ENCODE measurements at regions of chr7 and their contacts with region 1.

Region 1: GRCh38 chr7:35801392-35802101 is 690 bp downstream of the SEPTIN7 start:
- DNase-seq: peak; percentile 83
- ATAC-seq: peak; percentile 35
- H3K4me3 Mint-ChIP-seq: peak overlapping the region; percentile 97
- H3K27ac Mint-ChIP-seq: peak overlapping the region; percentile 99
- H3K4me1 Mint-ChIP-seq: peaks cover 43% of the 10 kb centered on the region
- H3K27me3 Mint-ChIP-seq: no peaks in the 10 kb centered on the region

Region 2: GRCh38 chr7:35037526-35038339 is 763.8 kb before region 1 on chr7:
- CTCF ChIA-PET with region 1: no interaction called
- POLR2A ChIA-PET with region 1: no interaction called
- intact Hi-C with region 1: loop called in 1 of 2 experiments (anchors 2 kb)
- DNase-seq: peak; percentile 93
- ATAC-seq: peak; percentile 82
- H3K4me3 Mint-ChIP-seq: peak overlapping the region; percentile 77
- H3K27ac Mint-ChIP-seq: peak overlapping the region; percentile 89
- H3K4me1 Mint-ChIP-seq: peaks cover 25% of the 10 kb centered on the region
- H3K27me3 Mint-ChIP-seq: no peaks in the 10 kb centered on the region

Region 3: DNA sequence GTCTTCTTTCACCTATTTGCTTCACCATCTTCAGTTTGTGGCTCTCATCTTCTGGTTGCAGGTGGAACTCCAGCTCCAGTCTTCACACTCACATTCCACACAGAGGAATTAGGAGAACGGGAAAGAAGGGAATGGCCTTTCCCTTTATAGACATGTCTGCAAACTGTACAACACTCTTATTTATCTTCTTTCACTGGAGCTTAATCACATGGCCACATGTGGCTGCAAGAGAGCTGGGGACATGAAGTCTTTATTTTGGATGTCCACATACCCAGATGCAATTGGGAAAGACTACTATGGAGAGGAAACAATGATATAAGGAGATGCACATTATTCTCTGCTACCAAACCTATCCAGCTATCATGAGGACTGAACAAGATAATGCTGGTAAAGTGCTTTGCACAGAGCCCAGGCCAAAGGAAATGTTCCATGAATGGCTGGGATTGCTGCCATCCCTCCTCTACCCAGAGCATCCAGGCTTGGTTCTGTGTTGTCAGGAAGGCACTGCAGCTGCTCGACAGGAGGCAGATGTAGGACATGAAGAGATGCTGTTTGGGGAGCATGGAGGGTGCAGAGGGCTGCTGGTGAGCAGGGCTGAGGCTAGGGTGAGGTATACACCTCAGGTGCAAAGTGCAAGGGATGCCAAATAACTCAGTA is 363.8 kb before region 1 on chr7:
- CTCF ChIA-PET with region 1: no interaction called
- POLR2A ChIA-PET with region 1: no interaction called
- intact Hi-C with region 1: no loop called
- DNase-seq: no peak
- ATAC-seq: no peak
- H3K4me3 Mint-ChIP-seq: no peak overlapping the region
- H3K27ac Mint-ChIP-seq: no peak overlapping the region
- H3K4me1 Mint-ChIP-seq: no peaks in the 10 kb centered on the region
- H3K27me3 Mint-ChIP-seq: peaks cover 10% of the 10 kb centered on the region

Region 4: GRCh38 chr7:35482241-35482640 is 319.3 kb before region 1 on chr7:
- CTCF ChIA-PET with region 1: no interaction called
- POLR2A ChIA-PET with region 1: no interaction called
- intact Hi-C with region 1: no loop called
- DNase-seq: no peak
- ATAC-seq: no peak
- H3K4me3 Mint-ChIP-seq: no peak overlapping the region
- H3K27ac Mint-ChIP-seq: no peak overlapping the region
- H3K4me1 Mint-ChIP-seq: no peaks in the 10 kb centered on the region
- H3K27me3 Mint-ChIP-seq: peaks cover 14% of the 10 kb centered on the region

Region 5: DNA sequence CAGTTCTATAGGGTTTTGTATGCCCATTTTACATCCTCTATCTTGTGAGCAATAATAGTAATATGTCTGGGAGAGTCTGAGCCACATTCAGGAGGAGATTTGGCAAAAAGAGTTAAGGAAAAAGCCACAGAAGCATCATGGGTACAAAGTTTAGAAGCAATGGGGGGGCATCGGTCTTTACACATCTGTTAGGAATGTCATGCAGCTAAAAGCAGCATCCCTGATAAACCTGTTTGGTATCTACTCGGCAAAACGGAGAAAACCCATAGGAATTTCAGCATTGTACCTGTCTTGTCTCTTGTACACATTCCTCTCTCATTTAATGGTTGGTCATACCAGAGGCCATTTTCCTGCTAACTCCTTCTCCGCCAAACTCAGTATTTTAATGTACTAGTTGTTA is 94.1 kb before region 1 on chr7:
- CTCF ChIA-PET with region 1: interaction called, 5 read pairs
- POLR2A ChIA-PET with region 1: no interaction called
- intact Hi-C with region 1: loop called in 1 of 2 experiments (anchors 1 kb)
- DNase-seq: no peak
- ATAC-seq: no peak
- H3K4me3 Mint-ChIP-seq: no peak overlapping the region
- H3K27ac Mint-ChIP-seq: no peak overlapping the region
- H3K4me1 Mint-ChIP-seq: peaks cover 15% of the 10 kb centered on the region
- H3K27me3 Mint-ChIP-seq: peaks cover 2% of the 10 kb centered on the region

Region 6: DNA sequence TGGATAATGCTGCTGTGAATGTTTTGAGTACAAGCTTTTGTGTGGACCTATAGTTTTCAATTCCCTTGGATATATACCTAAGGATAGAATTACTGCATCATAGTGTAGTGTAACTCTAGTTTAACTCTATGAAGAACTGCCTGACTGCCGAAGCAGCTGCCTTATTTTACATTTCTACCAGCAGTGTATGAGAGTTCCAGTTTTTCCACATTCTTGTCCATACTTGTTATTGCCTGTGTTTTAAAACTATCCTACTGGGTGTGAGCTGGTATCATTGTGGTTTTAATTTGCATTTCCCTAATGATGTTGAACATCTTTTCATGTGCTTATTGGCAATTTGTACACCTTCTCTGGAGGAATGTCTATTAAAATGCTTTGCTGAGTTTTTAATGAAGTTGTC is 15.0 kb after region 1 on chr7:
- CTCF ChIA-PET with region 1: interaction called, 18 read pairs
- POLR2A ChIA-PET with region 1: interaction called, 8 read pairs
- intact Hi-C with region 1: loop called (anchors 1 to 2 kb)
- DNase-seq: no peak
- ATAC-seq: no peak
- H3K4me3 Mint-ChIP-seq: no peak overlapping the region
- H3K27ac Mint-ChIP-seq: no peak overlapping the region
- H3K4me1 Mint-ChIP-seq: peaks cover 76% of the 10 kb centered on the region
- H3K27me3 Mint-ChIP-seq: no peaks in the 10 kb centered on the region

Region 7: GRCh38 chr7:35869810-35870209 is 68.3 kb after region 1 on chr7:
- CTCF ChIA-PET with region 1: no interaction called
- POLR2A ChIA-PET with region 1: no interaction called
- intact Hi-C with region 1: loop called in 1 of 2 experiments (anchors 5 kb)
- DNase-seq: no peak
- ATAC-seq: no peak
- H3K4me3 Mint-ChIP-seq: no peak overlapping the region
- H3K27ac Mint-ChIP-seq: no peak overlapping the region
- H3K4me1 Mint-ChIP-seq: peaks cover 27% of the 10 kb centered on the region
- H3K27me3 Mint-ChIP-seq: no peaks in the 10 kb centered on the region

Region 8: DNA sequence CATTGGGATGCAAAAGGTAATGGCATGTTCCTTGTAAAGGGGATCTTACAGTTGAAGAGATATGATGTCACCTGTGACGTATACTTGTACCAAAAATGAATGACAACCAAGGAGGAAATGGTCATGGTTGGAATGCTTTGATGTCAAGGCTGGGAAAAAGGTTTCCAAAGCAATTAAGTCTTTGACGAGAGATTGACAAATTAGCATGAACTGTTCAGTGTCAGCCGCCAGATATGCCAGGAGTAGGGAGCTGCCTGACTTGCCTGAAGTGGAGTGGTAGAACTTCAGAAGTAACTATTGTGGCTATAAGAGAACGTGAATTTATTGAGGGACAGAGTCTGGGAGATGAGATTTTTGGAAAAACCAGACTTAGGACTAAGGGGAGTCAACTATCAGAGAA is 87.5 kb after region 1 on chr7:
- CTCF ChIA-PET with region 1: no interaction called
- POLR2A ChIA-PET with region 1: no interaction called
- intact Hi-C with region 1: no loop called
- DNase-seq: no peak
- ATAC-seq: no peak
- H3K4me3 Mint-ChIP-seq: no peak overlapping the region
- H3K27ac Mint-ChIP-seq: no peak overlapping the region
- H3K4me1 Mint-ChIP-seq: peaks cover 15% of the 10 kb centered on the region
- H3K27me3 Mint-ChIP-seq: no peaks in the 10 kb centered on the region

Region 9: DNA sequence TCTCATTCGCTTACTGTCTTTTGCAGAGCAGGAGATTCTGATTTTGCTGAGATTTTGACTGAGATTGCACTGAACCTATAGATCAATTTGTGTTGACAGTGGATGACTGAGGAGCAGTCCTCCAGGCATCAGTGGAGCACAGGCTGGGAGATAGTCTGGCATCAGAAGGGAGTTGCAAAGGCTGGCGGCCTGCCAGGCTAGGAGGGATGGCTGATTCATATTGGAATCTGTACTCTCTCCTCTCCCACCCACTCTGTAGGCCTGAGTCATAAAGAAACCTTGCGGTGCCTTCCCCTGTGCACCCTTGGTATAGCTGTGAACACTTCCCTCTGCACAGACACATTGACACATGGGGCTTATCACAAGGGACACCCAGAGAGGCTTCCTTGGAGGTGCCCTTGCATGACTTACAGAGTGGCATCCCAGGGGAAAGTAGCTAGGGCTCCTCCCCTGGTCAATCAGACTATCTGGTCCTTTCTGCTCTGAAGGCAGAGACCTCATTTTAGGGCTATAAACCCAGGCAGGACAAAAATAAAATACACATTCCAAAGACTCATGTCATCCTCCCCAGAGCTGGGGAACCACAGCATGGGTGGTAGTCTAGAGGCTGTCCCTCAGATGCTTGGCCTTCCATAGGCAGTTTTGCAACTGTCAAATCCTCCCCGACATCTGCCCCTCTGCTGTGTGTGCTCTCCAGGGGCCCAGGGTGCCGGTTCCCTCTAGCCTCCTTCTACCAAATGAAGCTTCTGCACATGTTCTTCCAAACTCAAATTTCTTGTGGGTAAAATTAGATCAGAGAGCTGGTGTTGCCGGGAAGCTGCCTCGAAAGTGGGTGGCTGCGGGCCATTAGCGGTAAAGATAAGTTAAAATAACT is 314.1 kb after region 1 on chr7:
- CTCF ChIA-PET with region 1: no interaction called
- POLR2A ChIA-PET with region 1: no interaction called
- intact Hi-C with region 1: loop called in 1 of 2 experiments (anchors 10 kb)
- DNase-seq: peak; percentile 96
- ATAC-seq: peak; percentile 99
- H3K4me3 Mint-ChIP-seq: no peak overlapping the region
- H3K27ac Mint-ChIP-seq: peak overlapping the region; percentile 59
- H3K4me1 Mint-ChIP-seq: peaks cover 35% of the 10 kb centered on the region
- H3K27me3 Mint-ChIP-seq: peaks cover 27% of the 10 kb centered on the region

Region 10: GRCh38 chr7:36366718-36367560 is 565.4 kb after region 1 on chr7:
- CTCF ChIA-PET with region 1: no interaction called
- POLR2A ChIA-PET with region 1: no interaction called
- intact Hi-C with region 1: loop called in 1 of 2 experiments (anchors 2 kb)
- DNase-seq: peak; percentile 95
- ATAC-seq: peak; percentile 98
- H3K4me3 Mint-ChIP-seq: peak overlapping the region; percentile 83
- H3K27ac Mint-ChIP-seq: peak overlapping the region; percentile 19
- H3K4me1 Mint-ChIP-seq: no peaks in the 10 kb centered on the region
- H3K27me3 Mint-ChIP-seq: peaks cover 10% of the 10 kb centered on the region

Measured in activated CD4-positive, alpha-beta T cell treated with anti-CD3 and anti-CD28 coated beads for 36 hours (primary cell).